ENCODE measurements at regions of chr15 and their contacts with region 1.

Region 1: DNA sequence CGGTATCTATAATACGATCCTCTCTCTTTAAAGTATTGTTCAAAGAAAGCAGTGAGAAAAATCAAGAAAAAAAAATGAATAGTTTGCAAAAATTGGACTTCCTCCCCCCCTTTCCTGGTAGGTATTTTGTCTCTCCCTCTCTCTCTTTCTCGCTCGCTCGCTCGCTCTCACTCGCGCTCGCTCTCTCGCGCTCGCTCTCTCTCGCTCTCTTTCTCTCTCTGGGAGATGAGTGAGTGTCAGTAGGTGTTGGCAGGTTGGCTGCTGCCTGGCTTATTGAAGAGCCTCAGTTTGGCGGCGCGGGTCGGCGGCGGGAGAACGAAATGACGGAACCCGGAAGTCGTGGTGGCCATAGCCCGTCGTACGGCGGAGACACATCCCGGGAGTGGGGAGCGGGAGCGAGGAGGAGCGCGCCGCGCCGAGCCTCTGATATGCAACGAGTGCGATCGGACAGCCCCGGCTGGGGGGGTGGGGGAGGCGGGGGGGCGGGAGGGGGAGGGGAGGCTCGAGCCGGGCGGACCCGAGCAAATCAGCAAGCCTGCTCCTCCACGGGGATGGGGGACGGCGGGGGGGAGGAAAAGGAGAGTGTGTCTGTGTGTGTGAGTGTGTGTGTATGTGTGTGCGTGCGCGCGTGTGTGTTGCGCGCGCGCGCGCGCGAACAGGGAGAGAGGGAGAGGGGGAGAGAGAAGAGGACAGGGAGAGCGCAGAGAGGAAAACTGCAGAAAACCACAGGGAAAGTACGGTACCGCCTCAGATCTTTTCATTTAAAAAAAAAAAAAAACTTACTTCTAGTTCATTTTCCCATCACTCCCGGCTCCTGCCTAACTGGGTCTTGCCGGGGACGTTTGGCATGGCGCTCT is at the start of gene MEIS2:
- DNase-seq: peak; percentile 91
- ATAC-seq: peak; percentile 82 to 89
- H3K4me3 ChIP-seq: peak within 1 kb of the TSS; percentile 56
- H3K27ac ChIP-seq: peak within 1 kb of the TSS; percentile 91
- H3K4me1 ChIP-seq: peaks cover 4% of the 10 kb centered on the region
- H3K27me3 ChIP-seq: peaks cover 35% of the 10 kb centered on the region
- CTCF ChIP-seq: no peak
- total RNA-seq, gene MEIS2: 20.7 TPM

Region 2: DNA sequence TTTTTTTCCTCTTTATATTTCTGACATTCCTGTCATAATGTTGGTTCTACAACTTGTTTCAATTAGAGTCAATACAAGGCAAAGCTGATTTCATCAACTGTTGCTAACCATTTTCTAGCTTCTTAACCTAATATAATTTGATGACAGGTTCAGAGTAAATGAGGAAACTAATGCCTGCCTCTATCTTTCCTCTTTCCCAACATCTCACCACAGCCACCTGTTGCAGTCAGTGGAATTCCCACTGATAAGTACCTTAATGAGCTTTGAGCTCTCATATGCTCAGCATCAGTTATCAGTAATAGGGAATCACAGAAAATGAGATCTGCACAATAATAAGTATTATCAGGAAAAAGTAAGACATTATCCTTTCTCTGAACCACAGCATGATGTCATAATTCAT is 241.9 kb before region 1 on chr15:
- intact Hi-C with region 1: no loop called
- DNase-seq: no peak
- ATAC-seq: no peak
- H3K4me3 ChIP-seq: no peak overlapping the region
- H3K27ac ChIP-seq: no peak overlapping the region
- H3K4me1 ChIP-seq: no peaks in the 10 kb centered on the region
- H3K27me3 ChIP-seq: no peaks in the 10 kb centered on the region
- CTCF ChIP-seq: no peak

Region 3: GRCh38 chr15:36883713-36884517 is 216.4 kb before region 1 on chr15:
- intact Hi-C with region 1: loop called (anchors 10 kb)
- DNase-seq: peak; percentile 86
- ATAC-seq: peak; percentile 89 to 94
- H3K4me3 ChIP-seq: peak overlapping the region; percentile 31
- H3K27ac ChIP-seq: no peak overlapping the region
- H3K4me1 ChIP-seq: peaks cover 17% of the 10 kb centered on the region
- H3K27me3 ChIP-seq: peaks cover 98% of the 10 kb centered on the region
- CTCF ChIP-seq: peak; percentile 85

Region 4: GRCh38 chr15:37034835-37035748 is 65.2 kb before region 1 on chr15:
- intact Hi-C with region 1: no loop called
- DNase-seq: no peak
- ATAC-seq: no peak
- H3K4me3 ChIP-seq: no peak overlapping the region
- H3K27ac ChIP-seq: no peak overlapping the region
- H3K4me1 ChIP-seq: peaks cover 5% of the 10 kb centered on the region
- H3K27me3 ChIP-seq: no peaks in the 10 kb centered on the region
- CTCF ChIP-seq: no peak

Region 5: DNA sequence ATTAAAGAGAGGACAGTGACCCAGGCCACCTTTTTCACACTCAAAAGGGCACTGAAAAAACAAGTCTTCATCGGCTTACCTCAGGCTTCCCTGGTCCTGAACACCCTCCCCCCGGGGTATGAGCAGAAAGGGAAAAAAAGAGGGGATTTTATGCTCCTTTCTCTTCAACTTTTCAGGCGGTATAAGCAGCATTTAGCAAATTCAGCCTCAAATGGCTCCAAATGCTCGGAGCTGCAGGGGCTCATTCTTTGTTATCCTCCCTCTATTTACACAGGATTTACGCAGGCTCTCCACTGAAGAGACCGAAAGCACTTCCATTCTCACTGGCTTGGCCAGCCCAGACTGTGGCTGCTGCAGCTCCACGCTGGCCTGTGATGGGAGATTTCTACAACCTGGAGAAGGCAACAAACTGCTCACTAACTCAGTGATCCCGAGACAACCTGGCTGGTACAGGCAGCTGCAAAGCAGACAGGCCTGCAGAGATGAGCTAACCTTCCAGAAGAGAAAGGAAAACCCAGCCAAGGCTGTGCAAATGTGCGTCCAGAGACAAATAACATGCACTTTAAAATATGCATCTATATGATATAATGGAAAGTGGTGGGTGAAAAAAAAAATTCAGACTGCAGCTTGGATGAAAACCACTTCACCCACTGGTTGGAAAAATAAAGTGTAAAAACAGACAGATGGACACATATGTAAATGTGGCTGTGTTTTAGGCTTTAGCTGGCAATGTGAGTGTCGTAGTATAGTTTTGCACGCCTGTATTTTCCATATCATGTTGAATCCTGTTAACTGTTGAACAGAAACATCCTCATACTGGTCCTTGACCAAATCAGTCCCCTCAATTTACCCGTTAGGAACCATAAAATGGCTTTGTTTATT is 54.2 kb before region 1 on chr15:
- intact Hi-C with region 1: loop called (anchors 5 kb)
- DNase-seq: peak; percentile 48
- ATAC-seq: peak; percentile 84 to 93
- H3K4me3 ChIP-seq: no peak overlapping the region
- H3K27ac ChIP-seq: peak overlapping the region; percentile 7
- H3K4me1 ChIP-seq: peaks cover 9% of the 10 kb centered on the region
- H3K27me3 ChIP-seq: no peaks in the 10 kb centered on the region
- CTCF ChIP-seq: no peak

Measured in lower lobe of right lung (tissue), 2 donors.